Right ventricle myocardium inferior (tissue), 1 donor: ENCODE measurements at regions of chr2 and their contacts with region 1.

Region 1: GRCh38 chr2:232636788-232637420 is 3.5 kb downstream of the EFHD1 start:
- DNase-seq: no peak
- ATAC-seq: no peak

Region 2: DNA sequence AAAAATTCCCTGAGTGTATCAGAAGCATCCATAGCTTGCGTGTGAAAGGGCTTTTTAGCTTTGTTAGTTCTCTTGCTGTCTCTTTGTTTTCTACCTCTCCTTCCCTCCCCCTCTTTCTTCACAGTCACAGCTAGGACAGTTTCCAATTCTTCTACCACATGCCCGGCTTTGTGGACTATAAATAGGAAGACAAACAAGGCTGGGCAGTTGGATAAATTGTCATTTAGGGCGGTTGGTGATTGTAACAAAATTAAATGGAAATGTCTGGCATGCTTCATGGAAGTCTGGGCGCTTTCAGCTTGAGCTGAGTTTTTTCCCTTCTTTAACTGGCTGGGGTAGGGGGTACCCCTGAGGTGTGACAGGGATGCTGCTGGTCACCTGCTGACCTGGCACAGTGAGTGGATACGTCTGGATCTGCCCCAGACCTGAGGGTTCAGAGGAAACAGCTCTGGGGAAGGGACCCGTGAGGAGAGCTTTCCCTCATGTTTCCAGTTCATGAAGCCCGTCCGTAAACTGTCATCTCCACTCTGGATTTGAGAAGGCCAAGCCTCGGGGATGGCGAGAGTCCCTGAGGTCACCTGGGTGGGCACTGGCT is 31.2 kb after region 1 on chr2:
- intact Hi-C with region 1: no loop called
- DNase-seq: no peak
- ATAC-seq: peak; percentile 53

Region 3: DNA sequence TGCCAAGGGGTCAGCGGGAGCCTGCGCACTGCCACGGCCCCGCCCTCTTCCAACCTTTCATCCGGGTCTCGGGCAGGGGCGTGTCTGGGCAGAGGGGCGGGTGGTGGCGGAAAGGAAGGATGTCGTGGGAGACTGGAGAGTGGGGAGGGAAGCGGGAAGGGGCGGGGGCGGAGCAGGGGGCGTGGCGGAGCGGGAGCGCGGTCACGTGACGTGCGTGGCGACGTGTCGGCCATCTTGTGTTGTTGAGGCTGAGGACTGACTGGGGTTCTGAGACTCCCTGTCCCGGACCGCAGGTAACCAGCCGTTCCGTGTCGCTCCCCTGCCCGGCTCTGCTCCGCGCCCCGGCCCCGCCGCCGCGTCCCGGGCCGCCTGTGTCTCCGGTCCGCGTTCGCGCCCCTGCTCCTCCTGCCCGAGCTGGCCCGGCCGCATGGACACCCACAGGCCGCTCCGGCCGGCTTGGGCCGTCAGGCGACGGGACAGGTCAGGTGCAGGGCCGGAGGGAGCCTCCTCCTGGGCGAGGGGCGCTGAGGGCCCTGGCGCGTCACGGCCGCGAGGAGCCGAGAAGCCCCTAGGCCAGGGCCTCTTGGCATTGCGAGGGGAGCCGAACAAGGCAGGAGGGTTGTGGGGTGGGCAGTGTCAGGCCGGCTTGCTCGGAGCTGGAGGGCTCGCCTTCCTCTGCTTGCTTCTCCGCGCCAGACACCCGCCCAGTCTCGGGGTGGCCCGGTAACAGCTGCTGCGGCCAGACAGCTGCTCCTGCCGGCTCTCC is 60.4 kb after region 1 on chr2 and contains the start of gene GIGYF2:
- intact Hi-C with region 1: loop called (anchors 1 kb)
- DNase-seq: peak; percentile 97
- ATAC-seq: peak; percentile 99
- total RNA-seq, gene GIGYF2: 57.2 TPM